Motor neuron (in vitro differentiated cells): ENCODE measurements at regions of chr11 and their contacts with region 1.

Region 1: GRCh38 chr11:115324581-115325432 is 179.4 kb downstream of the CADM1 start:
- ATAC-seq: peak; percentile 67 to 90 (median 82)
- H3K4me3 ChIP-seq: no peak overlapping the region
- H3K27ac ChIP-seq: peak overlapping the region in 1 of 2 donors; percentile 33
- H3K4me1 ChIP-seq: peaks cover 20 to 44% of the 10 kb centered on the region in 2 donors

Region 2: GRCh38 chr11:115126515-115127208 is 198.1 kb before region 1 on chr11:
- in situ Hi-C with region 1: no loop called
- ATAC-seq: peak in 2 of 8 experiments; percentile 25 to 41
- H3K4me3 ChIP-seq: no peak overlapping the region
- H3K27ac ChIP-seq: no peak overlapping the region
- H3K4me1 ChIP-seq: peaks cover 10 to 22% of the 10 kb centered on the region in 2 donors

Region 3: DNA sequence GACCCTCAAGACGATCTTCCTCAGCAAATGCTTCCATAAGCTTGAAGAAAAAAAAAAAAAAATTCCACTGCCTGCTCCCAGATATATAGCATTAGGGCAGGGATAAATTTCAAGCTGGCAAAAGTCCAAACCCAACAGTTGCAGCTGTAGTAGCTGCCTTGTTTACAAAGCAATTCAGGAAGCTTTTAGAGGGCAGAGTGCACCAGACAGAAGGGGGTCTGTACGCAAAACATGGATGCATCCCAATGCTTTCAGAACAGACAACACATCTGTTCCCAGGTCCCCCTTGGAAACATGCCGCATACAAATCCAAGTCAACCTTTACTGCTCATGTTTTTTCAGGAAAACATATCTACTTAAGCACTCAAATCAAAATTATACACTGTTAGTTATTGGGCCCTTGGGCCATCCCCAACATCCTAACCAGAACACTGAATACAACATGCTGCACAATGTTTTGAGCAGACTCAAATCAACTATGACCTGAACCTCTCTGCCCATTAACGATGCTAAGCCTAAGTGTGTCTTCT is 84.9 kb after region 1 on chr11:
- in situ Hi-C with region 1: no loop called
- ATAC-seq: peak in 5 of 8 experiments; percentile 52 to 95 (median 70)
- H3K4me3 ChIP-seq: no peak overlapping the region
- H3K27ac ChIP-seq: no peak overlapping the region
- H3K4me1 ChIP-seq: peaks cover 25 to 34% of the 10 kb centered on the region in 2 donors

Region 4: GRCh38 chr11:115496917-115497702 is 172.3 kb after region 1 on chr11:
- in situ Hi-C with region 1: loop called in 2 of 9 experiments (anchors 25 kb)
- ATAC-seq: no peak
- H3K4me3 ChIP-seq: no peak overlapping the region
- H3K27ac ChIP-seq: no peak overlapping the region
- H3K4me1 ChIP-seq: peaks cover 18 to 39% of the 10 kb centered on the region in 2 donors

Region 5: GRCh38 chr11:115555336-115556090 is 230.7 kb after region 1 on chr11:
- in situ Hi-C with region 1: no loop called
- ATAC-seq: peak in 5 of 8 experiments; percentile 73 to 96 (median 94)
- H3K4me3 ChIP-seq: no peak overlapping the region
- H3K27ac ChIP-seq: no peak overlapping the region
- H3K4me1 ChIP-seq: peaks cover 21 to 22% of the 10 kb centered on the region in 2 donors

Region 6: GRCh38 chr11:115848611-115849010 is 523.8 kb after region 1 on chr11:
- in situ Hi-C with region 1: no loop called
- ATAC-seq: peak in 2 of 8 experiments; percentile 89 to 91
- H3K4me3 ChIP-seq: no peak overlapping the region
- H3K27ac ChIP-seq: no peak overlapping the region
- H3K4me1 ChIP-seq: no peaks in the 10 kb centered on the region

Region 7: DNA sequence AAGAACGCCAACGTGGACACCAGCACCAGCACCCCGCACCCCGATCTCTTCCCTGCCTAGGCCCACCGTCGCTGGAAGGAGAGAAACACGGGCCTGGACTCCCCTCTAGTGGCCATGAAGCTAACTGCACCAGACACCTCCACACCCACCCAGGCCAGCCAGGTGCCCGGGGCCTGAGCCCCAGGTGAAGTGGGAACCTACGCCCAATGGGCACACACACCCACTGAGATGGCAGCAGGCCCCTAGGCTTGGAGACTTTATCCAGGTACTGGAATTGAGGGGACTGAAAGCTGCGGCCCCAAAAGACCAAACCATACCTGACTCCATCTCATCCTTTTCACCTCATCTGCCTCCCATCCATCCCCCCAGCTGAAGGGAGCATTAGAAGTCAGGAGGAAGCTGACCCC is 1367.0 kb after region 1 on chr11:
- in situ Hi-C with region 1: loop called in 3 of 9 experiments (anchors 25 kb)
- ATAC-seq: peak; percentile 62 to 91 (median 72)
- H3K4me3 ChIP-seq: no peak overlapping the region
- H3K27ac ChIP-seq: no peak overlapping the region
- H3K4me1 ChIP-seq: peaks cover 28 to 40% of the 10 kb centered on the region in 2 donors